PC-9 (cell line): ENCODE measurements at regions of chr20 and their contacts with region 1.

Region 1: DNA sequence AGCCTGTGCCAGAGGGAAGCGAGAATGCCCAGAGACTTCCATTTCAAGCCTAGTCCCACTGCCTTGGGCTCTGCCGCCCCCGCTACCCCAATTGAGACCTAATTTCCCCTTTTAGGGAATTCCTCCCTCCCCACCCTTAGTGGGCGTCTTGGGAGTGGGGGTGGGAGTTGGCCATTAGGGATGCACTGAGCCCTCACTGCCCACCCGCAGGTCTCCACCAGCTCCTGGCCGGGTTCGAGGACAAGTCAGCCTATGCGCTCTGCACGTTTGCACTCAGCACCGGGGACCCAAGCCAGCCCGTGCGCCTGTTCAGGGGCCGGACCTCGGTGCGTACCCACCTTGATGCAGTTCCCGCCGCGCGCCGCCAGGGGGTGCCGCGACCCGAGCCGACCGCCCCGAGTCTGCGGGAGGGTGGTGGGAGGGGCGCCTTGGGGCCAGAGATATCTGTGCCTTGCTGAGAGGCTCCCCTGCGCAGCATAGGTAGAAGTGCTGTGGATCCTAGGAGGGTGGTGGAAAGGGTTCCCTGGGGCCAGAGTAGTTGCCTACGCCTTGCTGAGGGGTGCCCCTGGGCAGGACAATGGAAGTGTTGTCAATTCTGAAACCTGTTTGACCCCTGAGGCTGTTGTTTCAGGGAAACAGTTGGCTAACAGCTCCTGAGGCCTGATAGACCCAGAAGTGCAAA is 9.2 kb downstream of the ITPA start:
- DNase-seq: peak; percentile 49 to 75
- H3K4me3 ChIP-seq: no peak overlapping the region
- H3K27ac ChIP-seq: no peak overlapping the region
- H3K4me1 ChIP-seq: peaks cover 15% of the 10 kb centered on the region; the same call in 1 of the 2 replicates
- H3K27me3 ChIP-seq: no peaks in the 10 kb centered on the region
- CTCF ChIP-seq: peak; percentile 93

Region 2: DNA sequence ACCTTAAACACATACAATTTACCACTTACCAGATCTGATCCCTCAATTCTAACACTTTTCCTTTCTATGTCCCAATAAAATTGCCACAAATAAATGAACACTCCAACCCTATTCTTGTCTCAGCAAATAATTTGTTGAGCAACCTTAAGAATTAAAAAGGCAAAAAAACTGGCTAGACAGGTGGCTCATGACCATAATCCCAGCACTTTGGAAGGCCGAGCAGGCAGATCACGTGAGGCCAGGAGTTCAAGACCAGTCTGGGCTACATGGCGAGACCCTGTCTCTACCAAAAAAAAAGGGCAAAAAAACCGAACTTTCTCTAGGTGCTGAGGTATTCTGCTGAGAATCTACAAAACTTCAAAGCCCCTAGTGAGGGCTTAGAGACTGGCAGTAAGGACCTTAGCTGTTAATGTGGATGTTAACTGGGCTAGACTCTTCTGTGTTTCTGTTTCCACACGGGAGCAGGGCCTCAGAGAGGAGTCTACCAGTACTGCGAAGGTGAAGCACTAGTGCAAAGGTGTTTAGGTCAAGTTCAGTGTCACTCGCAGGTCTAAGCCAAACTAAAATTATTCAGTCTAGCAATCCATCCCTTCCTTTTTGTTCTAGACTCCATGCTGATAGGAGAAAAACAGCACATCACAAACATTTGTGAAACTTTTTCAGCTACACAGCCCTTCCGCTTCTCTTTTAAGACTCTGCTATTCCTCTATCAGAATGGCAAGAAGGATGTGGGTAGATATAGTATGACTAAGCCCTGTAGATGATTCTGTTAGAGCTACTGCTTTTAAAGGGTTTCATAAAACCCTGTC is 61.4 kb before region 1 on chr20:
- CTCF ChIA-PET with region 1: interaction called, 12 read pairs
- POLR2A ChIA-PET with region 1: no interaction called
- intact Hi-C with region 1: no loop called
- DNase-seq: no peak
- H3K4me3 ChIP-seq: no peak overlapping the region; the same call in 1 of the 2 replicates
- H3K27ac ChIP-seq: no peak overlapping the region
- H3K4me1 ChIP-seq: peaks cover 21% of the 10 kb centered on the region
- H3K27me3 ChIP-seq: no peaks in the 10 kb centered on the region
- CTCF ChIP-seq: no peak

Region 3: DNA sequence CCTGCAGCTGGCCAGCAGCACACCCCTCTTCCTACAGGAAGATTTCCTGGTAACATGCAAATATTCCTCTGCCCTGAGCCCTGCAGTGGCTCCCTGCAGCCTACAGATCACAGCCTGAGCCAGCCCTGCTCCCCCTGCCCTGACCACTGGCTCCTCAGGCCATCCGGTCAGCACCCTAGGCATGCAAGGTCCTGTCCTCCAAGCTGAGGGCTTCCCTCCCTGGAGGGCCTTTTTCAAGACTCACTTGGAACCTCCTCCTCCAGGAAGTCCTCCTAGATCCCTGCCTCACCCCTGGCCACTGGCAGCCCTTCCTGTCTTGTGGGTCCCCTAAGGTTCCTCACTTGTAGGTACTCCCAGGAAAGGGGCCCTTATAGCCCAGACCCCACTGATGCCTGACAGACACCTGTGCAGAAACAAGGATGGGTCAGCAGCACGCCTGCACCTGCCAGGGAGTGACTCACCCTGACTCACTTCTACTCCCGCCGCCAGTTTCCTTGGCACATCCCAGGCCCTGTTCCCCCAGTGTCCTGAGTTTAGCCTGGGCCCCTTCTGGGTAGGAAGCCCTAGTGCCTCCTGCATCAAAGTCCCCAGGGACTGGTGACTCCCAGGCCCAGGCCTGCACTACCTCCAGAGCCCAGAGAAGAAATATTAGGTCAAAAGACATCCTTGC is 17.3 kb after region 1 on chr20:
- CTCF ChIA-PET with region 1: interaction called, 5 read pairs
- POLR2A ChIA-PET with region 1: interaction called, 7 read pairs
- intact Hi-C with region 1: loop called (anchors 1 kb)
- DNase-seq: peak; percentile 78 to 81
- H3K4me3 ChIP-seq: no peak overlapping the region
- H3K27ac ChIP-seq: no peak overlapping the region
- H3K4me1 ChIP-seq: peaks cover 23% of the 10 kb centered on the region
- H3K27me3 ChIP-seq: no peaks in the 10 kb centered on the region
- CTCF ChIP-seq: no peak

Region 4: DNA sequence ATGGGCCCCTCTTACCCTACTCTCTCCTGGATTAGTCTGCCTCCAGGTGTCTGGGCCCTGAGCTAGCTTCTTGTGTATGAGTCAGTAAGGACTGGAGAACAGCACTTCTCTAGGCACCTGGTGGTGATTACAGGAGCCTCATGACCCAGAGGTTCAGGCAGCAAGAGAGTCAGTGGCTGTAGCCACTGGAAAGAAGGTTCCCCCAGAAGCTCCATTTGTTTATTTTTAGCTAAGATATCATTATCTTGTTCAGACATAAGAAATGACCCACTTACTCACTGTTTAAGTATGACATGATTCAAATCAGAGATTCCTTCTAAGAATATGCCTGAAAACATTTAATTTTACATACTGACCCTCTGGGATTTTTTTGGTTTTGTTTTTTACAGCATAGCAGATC is 44.1 kb after region 1 on chr20:
- CTCF ChIA-PET with region 1: interaction called, 15 read pairs
- POLR2A ChIA-PET with region 1: no interaction called
- intact Hi-C with region 1: no loop called
- DNase-seq: no peak
- H3K4me3 ChIP-seq: no peak overlapping the region
- H3K27ac ChIP-seq: no peak overlapping the region
- H3K4me1 ChIP-seq: no peaks in the 10 kb centered on the region
- H3K27me3 ChIP-seq: no peaks in the 10 kb centered on the region
- CTCF ChIP-seq: no peak

Region 5: GRCh38 chr20:3312940-3313682 is 94.7 kb after region 1 on chr20:
- CTCF ChIA-PET with region 1: no interaction called
- POLR2A ChIA-PET with region 1: interaction called, 9 read pairs
- intact Hi-C with region 1: loop called (anchors 1 kb)
- DNase-seq: peak; percentile 54 to 93
- H3K4me3 ChIP-seq: no peak overlapping the region
- H3K27ac ChIP-seq: peak overlapping the region; percentile 83
- H3K4me1 ChIP-seq: peaks cover 49% of the 10 kb centered on the region
- H3K27me3 ChIP-seq: no peaks in the 10 kb centered on the region
- CTCF ChIP-seq: no peak

Region 6: GRCh38 chr20:3470627-3471396 is 252.4 kb after region 1 on chr20 and contains the start of gene ATRN:
- CTCF ChIA-PET with region 1: no interaction called
- POLR2A ChIA-PET with region 1: no interaction called
- intact Hi-C with region 1: loop called (anchors 10 kb)
- DNase-seq: peak; percentile 49 to 91
- H3K4me3 ChIP-seq: peak within 1 kb of the TSS; percentile 80
- H3K27ac ChIP-seq: no peak within 1 kb of the TSS
- H3K4me1 ChIP-seq: peaks cover 22% of the 10 kb centered on the region
- H3K27me3 ChIP-seq: no peaks in the 10 kb centered on the region
- CTCF ChIP-seq: no peak
- total RNA-seq, gene ATRN: 34.9 and 35.0 TPM in 2 replicates